ENCODE measurements at regions of chr1 and their contacts with region 1.

Region 1: DNA sequence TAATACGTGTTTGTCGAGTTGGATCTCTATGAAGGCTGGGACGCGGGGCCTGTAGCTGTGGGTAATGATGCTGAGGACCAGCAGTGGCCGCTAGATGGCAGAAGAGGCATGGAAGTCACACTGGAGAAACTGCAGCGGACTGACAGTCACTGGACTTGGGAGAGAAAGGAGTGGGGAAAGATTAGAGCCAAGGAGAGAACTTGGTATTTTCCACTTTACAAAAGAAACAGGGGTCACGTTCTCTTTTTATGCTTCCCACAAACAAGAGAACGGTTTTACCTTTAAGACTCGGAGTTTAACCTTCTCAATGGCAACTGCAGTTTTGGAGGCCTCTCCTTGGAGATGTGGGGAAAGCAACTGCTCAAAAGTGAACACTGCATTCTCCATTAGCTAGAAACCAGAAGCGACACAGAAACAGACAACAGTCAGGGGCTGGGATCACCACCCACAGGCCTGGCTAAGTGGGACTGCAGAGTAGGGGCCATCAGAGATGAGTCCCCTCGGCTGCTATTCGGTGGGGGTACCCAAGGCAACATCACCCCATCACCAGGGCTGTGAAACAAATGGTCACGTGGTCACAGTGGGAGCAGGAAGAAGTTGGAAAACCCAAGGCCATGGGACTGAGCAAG is 51.1 kb upstream of the EDEM3 start:
- DNase-seq: peak; percentile 86 to 93 (median 87)
- ATAC-seq: peak; percentile 87 to 96 (median 95)
- H3K4me3 ChIP-seq: no peak overlapping the region
- H3K27ac ChIP-seq: peak overlapping the region in 9 of 12 donors; percentile 0 to 68 (median 28)
- H3K4me1 ChIP-seq: peaks cover 0 to 21% (median 7%) of the 10 kb centered on the region in 12 donors
- H3K27me3 ChIP-seq: no peaks in the 10 kb centered on the region
- CTCF ChIP-seq: peak; percentile 87 to 97 (median 93)
- POLR2A ChIP-seq: no peak

Region 2: GRCh38 chr1:184838489-184838951 is 32.7 kb after region 1 on chr1:
- intact Hi-C with region 1: no loop called
- DNase-seq: peak in 3 of 5 donors; percentile 44 to 66 (median 53)
- ATAC-seq: peak; percentile 74 to 92 (median 87)
- H3K4me3 ChIP-seq: no peak overlapping the region
- H3K27ac ChIP-seq: peak overlapping the region; percentile 14 to 87 (median 74)
- H3K4me1 ChIP-seq: peaks cover 0 to 61% (median 33%) of the 10 kb centered on the region in 12 donors
- H3K27me3 ChIP-seq: no peaks in the 10 kb centered on the region
- CTCF ChIP-seq: peak in 1 of 12 donors; percentile 9
- POLR2A ChIP-seq: no peak

Region 3: GRCh38 chr1:184860985-184861759 is 55.4 kb after region 1 on chr1:
- intact Hi-C with region 1: no loop called
- DNase-seq: peak in 1 of 5 donors; percentile 33
- ATAC-seq: peak in 2 of 4 donors; percentile 56 to 74
- H3K4me3 ChIP-seq: no peak overlapping the region
- H3K27ac ChIP-seq: peak overlapping the region in 7 of 12 donors; percentile 5 to 37 (median 19)
- H3K4me1 ChIP-seq: peaks cover 0 to 34% (median 10%) of the 10 kb centered on the region in 12 donors
- H3K27me3 ChIP-seq: no peaks in the 10 kb centered on the region
- CTCF ChIP-seq: no peak
- POLR2A ChIP-seq: no peak

Region 4: GRCh38 chr1:185170291-185170848 is 364.6 kb after region 1 on chr1:
- intact Hi-C with region 1: loop called in 5 of 10 experiments (anchors 5 to 10 kb)
- DNase-seq: peak in 1 of 5 donors; percentile 19
- ATAC-seq: peak in 3 of 4 donors; percentile 39 to 64 (median 53)
- H3K4me3 ChIP-seq: no peak overlapping the region
- H3K27ac ChIP-seq: no peak overlapping the region
- H3K4me1 ChIP-seq: peaks cover 0 to 4% (median 0%) of the 10 kb centered on the region in 12 donors
- H3K27me3 ChIP-seq: no peaks in the 10 kb centered on the region
- CTCF ChIP-seq: peak; percentile 31 to 74 (median 62)
- POLR2A ChIP-seq: no peak